Caco-2 (cell line): ENCODE measurements at regions of chr2 and their contacts with region 1.

Region 1: GRCh38 chr2:223853425-223853837 is 16.0 kb upstream of the AP1S3 start:
- DNase-seq: no peak
- H3K4me3 ChIP-seq: no peak overlapping the region
- H3K4me3 Mint-ChIP-seq: peak overlapping the region; percentile 36
- H3K27ac Mint-ChIP-seq: peak overlapping the region; percentile 84
- H3K4me1 ChIP-seq: peaks cover 80% of the 10 kb centered on the region
- H3K4me1 Mint-ChIP-seq: peaks cover 70% of the 10 kb centered on the region
- H3K27me3 ChIP-seq: no peaks in the 10 kb centered on the region
- H3K27me3 Mint-ChIP-seq: no peaks in the 10 kb centered on the region
- CTCF ChIP-seq: no peak

Region 2: GRCh38 chr2:223744573-223744972 is 108.9 kb before region 1 on chr2:
- CTCF ChIA-PET with region 1: no interaction called
- POLR2A ChIA-PET with region 1: no interaction called
- intact Hi-C with region 1: loop called (anchors 1 kb)
- DNase-seq: peak; percentile 89 to 90
- H3K4me3 ChIP-seq: no peak overlapping the region
- H3K4me3 Mint-ChIP-seq: peak overlapping the region; percentile 52
- H3K27ac Mint-ChIP-seq: peak overlapping the region; percentile 85
- H3K4me1 ChIP-seq: peaks cover 34% of the 10 kb centered on the region
- H3K4me1 Mint-ChIP-seq: peaks cover 37% of the 10 kb centered on the region
- H3K27me3 ChIP-seq: no peaks in the 10 kb centered on the region
- H3K27me3 Mint-ChIP-seq: no peaks in the 10 kb centered on the region
- CTCF ChIP-seq: no peak

Region 3: DNA sequence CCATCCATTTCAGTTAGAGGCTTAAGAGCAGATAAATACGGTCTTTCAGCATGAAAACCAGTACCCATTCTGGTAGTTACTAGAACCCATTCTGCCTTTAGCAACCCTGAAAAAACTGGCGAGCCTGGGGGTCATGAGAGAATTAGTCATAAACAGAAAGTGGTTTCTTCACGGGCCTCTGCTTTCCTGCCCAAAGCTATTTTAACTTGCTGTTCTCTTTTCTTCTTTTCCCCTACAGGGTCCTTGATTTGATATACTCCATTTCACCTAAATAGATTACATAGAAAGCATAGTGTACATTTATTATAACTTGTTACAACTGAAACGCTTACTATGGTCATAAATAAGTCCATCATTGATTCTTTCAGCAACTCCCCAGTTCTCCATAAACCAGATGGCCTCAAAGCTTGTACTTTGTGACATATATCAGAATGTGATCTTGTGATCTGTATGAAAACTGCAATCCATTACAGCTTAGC is 43.4 kb after region 1 on chr2:
- CTCF ChIA-PET with region 1: no interaction called
- POLR2A ChIA-PET with region 1: no interaction called
- intact Hi-C with region 1: no loop called
- DNase-seq: no peak
- H3K4me3 ChIP-seq: no peak overlapping the region
- H3K4me3 Mint-ChIP-seq: no peak overlapping the region
- H3K27ac Mint-ChIP-seq: no peak overlapping the region
- H3K4me1 ChIP-seq: 0 out of 2 replicates have a peak, but pooled peaks cover 4% of the 10 kb centered on the region
- H3K4me1 Mint-ChIP-seq: peaks cover 12% of the 10 kb centered on the region
- H3K27me3 ChIP-seq: no peaks in the 10 kb centered on the region
- H3K27me3 Mint-ChIP-seq: no peaks in the 10 kb centered on the region
- CTCF ChIP-seq: no peak